Right ventricle myocardium superior (tissue), 1 donor: ENCODE measurements at regions of chr7 and their contacts with region 1.

Region 1: DNA sequence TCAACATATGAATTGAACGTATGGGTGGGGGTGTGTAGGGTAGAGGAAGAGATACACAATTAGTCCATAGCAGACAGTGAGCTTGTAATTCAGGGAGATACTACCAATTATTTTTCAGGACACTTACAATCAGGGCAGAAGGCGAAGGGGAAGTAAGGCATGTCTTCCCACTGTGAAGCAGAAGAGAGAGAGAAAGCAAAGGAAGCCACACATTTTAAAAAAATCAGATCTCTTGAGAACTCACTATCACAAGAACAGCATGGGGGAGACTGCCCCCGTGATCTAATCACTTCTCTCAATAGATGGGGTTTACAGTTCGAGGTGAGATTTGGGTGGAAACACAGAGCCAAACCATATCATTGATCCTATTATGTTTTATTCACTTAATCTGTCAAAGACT is 116.4 kb upstream of the RPA3 start:
- DNase-seq: no peak
- ATAC-seq: no peak

Region 2: DNA sequence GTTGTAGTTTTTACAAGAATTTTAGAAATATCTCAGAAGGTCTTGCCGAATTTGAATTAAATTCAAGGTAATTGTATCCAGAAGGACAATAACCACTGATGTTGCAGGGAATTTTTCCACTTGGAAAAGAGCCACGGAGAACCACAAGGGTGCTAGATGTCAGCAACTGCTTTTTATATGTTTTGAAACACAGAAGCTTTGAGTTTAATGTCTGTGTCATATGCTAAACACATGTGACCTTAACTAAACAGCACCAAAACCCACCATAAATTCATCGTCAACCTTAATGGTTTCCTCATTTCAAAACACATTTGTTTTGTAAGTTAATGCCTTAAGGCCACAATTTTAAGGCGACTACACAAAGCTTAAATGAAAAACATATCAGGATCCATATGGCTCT is 406.0 kb before region 1 on chr7:
- intact Hi-C with region 1: no loop called
- DNase-seq: no peak
- ATAC-seq: no peak

Region 3: GRCh38 chr7:7614018-7614741 is 220.6 kb before region 1 on chr7:
- intact Hi-C with region 1: no loop called
- DNase-seq: no peak
- ATAC-seq: no peak

Region 4: DNA sequence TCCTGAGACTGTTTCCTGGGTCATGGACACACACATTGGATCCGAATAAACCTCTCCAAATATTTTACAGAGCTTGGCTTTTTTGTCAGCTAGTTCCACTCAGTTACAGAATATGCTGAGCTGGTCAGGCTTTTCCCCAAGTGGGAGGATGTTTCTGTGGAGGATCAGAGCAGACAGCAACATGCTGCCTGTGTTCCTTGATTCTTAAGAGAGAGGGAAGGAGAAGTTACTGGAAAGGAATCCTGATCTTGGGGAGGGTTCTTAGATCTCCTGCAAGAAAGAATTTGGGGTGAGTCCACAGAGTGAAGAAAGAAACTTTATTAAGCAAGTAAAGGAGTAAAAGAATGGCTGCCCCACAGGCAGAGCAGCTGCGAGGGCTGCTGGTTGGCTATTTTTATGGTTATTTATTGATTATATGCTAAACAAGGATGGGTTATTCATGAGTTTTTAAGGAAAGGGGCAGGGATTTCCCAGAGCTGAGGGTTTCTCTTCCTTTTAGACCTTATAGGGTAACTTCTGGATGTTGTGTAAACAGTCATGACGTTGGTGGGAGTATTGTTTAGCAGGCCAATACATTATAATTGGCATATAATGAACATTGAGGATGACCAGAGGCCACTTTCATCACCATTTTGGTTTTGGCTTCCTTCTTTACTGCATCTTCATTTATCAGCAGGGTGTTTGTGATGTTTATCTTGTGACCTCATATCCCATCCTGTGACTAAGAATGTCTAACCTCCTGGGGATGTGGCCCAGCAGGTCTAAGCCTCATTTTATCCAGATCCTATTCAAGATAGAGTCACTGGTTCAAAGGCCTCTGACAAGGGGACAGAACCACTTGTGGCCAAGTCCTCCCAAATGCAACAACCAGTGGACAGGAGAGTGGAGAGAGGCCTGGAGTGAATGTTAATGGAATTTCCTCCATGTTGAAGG is 39.3 kb before region 1 on chr7:
- intact Hi-C with region 1: no loop called
- DNase-seq: no peak
- ATAC-seq: no peak

Region 5: DNA sequence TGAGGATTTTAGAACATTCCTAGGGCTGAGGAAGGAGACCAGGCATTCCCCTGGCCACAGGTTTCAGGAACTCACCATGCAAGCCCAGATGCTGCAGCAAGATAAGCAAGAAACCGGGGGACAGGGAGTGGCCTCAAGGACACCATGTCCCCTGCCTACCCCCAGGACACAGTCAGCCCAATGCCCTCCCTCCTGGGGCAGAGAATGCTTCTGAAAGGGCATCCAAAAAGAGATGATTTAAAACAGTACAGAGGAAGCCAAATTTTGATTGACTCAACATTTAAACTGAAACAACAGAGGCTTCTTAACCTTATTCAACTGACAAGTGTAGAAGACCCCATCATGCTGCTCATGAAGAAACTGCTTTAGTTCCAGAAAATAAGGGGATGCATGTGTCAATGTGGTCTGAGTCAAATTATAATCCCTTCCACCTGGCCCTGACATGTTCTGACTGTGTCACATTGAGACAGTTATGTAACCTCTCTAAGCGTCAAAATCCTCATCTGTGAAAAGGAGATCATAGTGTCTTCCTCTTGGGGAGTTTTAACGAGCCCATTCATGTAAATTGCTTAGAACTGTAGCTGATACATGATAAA is 367.2 kb after region 1 on chr7:
- intact Hi-C with region 1: loop called (anchors 5 kb)
- DNase-seq: no peak
- ATAC-seq: no peak